B cell (primary cell): ENCODE measurements at regions of chr18 and their contacts with region 1.

Region 1: GRCh38 chr18:54261894-54262293 is 7.4 kb upstream of the POLI start:
- DNase-seq: peak; percentile 55
- ATAC-seq: peak; percentile 76
- H3K4me3 ChIP-seq: no peak overlapping the region
- H3K4me3 Mint-ChIP-seq: peak overlapping the region; percentile 57
- H3K27ac ChIP-seq: peak overlapping the region; percentile 74 to 88
- H3K27ac Mint-ChIP-seq: peak overlapping the region; percentile 87
- H3K4me1 ChIP-seq: peaks cover 24 to 34% of the 10 kb centered on the region in 2 donors
- H3K4me1 Mint-ChIP-seq: peaks cover 51% of the 10 kb centered on the region
- H3K27me3 ChIP-seq: no peaks in the 10 kb centered on the region
- H3K27me3 Mint-ChIP-seq: no peaks in the 10 kb centered on the region
- CTCF ChIP-seq: no peak

Region 2: DNA sequence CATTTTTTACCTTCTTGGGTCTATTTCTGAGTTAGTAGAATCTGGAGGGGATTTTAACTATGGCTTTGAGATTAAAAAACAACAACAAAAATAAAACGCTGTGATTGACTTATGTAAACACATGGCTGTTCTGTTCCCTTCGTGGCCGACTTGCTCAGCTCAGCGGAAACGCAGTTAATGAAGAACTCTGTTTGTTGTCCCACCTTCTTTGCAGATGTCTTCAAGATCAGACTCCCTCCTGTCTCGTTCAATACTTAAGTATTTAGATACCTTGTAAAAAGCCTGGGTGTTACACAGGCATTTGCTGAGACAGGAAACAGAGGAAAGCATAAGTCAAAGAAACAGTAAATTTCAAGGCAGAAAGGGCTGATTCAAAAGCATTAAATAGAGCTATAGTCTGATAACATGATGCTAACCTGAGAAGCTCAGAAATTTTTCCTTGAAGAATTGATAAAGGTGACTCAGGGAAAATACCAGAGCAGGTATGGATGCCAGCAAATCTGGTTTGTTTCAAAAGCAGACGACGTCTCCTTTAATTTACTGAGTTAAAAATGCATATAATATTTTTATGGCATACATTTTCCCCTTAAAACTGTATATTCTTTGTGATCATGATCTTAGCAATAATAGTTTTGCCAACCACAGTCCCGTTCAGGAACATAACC is 14.3 kb before region 1 on chr18:
- CTCF ChIA-PET with region 1: interaction called, 4 read pairs
- POLR2A ChIA-PET with region 1: interaction called, 5 read pairs
- intact Hi-C with region 1: loop called (anchors 1 kb)
- DNase-seq: no peak
- ATAC-seq: no peak
- H3K4me3 ChIP-seq: peak overlapping the region in 2 of 5 experiments; percentile 1 to 4
- H3K4me3 Mint-ChIP-seq: peak overlapping the region; percentile 60
- H3K27ac ChIP-seq: peak overlapping the region; percentile 70 to 76
- H3K27ac Mint-ChIP-seq: peak overlapping the region; percentile 93
- H3K4me1 ChIP-seq: peaks cover 39 to 44% of the 10 kb centered on the region in 2 donors
- H3K4me1 Mint-ChIP-seq: peaks cover 42% of the 10 kb centered on the region
- H3K27me3 ChIP-seq: no peaks in the 10 kb centered on the region
- H3K27me3 Mint-ChIP-seq: no peaks in the 10 kb centered on the region
- CTCF ChIP-seq: no peak